Lower leg skin (tissue), 4 donors: ENCODE measurements at regions of chr3 and their contacts with region 1.

Region 1: DNA sequence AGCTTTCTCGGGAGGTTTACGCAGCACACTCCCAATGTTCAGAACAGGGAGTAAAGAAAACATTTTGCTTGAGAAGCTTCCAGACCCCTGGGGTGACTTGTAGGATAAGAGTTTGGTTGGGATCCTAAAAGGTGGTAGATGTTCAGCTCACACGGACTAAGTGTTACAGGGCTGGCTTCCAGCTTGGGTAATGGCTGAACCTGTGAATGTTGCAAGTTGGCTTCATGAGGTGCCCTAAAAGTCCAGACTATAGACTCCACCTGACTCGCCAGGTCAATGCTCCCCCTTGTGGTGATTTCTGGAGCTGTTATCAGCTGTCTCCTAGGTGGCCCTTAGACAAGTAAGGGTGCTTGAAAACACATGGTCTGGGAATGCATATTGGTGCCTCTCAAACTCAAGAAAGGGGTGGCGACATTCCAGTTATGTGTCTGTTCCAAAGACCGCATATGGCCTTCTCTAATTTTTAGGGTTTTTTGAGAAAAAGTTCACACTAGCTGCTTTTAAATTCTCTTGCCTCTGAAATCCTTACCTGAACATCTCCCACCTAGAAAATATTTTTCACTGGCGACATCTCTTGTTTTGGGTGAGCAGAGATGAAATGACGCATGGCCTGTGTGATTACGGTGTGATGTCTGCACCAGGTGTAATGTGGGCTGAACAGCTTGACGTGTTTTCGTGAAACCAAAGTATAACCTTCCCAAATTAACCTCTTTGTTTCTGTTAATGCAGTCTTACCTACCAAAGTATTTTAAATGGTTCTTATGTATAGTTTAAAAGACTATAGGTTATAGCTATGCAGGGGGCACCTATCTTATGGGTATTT is 175.7 kb upstream of the KBTBD8 start:
- DNase-seq: peak; percentile 60 to 89
- H3K4me3 ChIP-seq: no peak overlapping the region
- CTCF ChIP-seq: peak in 1 of 3 donors; percentile 20
- POLR2A ChIP-seq: no peak

Region 2: GRCh38 chr3:66253790-66254620 is 568.4 kb before region 1 on chr3:
- intact Hi-C with region 1: loop called (anchors 10 kb)
- DNase-seq: no peak
- H3K4me3 ChIP-seq: no peak overlapping the region
- CTCF ChIP-seq: no peak
- POLR2A ChIP-seq: no peak

Region 3: DNA sequence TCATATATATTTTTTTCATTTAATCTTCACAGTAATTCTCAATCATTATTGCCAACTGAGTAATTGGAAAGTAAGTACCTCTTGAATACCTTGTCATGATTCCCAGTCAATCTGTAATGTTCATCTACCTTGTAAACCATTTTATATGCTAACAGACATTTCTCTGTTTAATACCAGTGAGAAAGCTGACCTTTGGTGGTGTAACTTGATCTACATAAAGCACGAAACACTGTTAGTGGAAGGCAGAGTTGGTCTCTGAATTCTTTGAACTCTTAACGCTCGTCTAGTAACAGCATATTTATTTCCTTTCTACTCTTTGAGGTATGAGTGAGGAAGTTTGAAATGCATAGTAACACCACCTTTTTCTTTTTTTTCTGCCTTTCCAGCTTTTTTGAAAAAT is 542.1 kb before region 1 on chr3:
- intact Hi-C with region 1: loop called (anchors 10 kb)
- DNase-seq: no peak
- H3K4me3 ChIP-seq: no peak overlapping the region
- CTCF ChIP-seq: no peak
- POLR2A ChIP-seq: no peak

Region 4: GRCh38 chr3:66931291-66931690 is 108.9 kb after region 1 on chr3:
- intact Hi-C with region 1: no loop called
- DNase-seq: no peak
- H3K4me3 ChIP-seq: no peak overlapping the region
- CTCF ChIP-seq: no peak
- POLR2A ChIP-seq: no peak

Region 5: DNA sequence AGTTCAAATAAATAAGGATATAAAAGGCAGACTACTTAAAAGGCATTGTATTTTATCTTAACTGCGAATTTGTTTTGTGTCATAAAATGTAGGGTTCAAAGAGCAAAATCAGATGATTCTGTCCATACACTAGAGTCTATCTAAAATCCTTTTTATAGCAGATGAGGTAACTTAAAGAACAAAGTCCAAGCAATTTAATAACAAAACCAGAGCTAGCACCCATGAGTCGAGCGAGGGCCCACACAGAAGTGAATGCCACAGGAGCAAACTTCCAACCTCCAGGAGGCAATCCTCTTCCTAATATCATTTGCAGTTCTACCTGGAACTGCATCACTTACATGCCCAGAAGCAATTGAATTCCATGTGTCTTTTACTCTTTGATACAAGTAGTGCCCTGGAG is 140.3 kb after region 1 on chr3:
- intact Hi-C with region 1: no loop called
- DNase-seq: no peak
- H3K4me3 ChIP-seq: no peak overlapping the region
- CTCF ChIP-seq: no peak
- POLR2A ChIP-seq: no peak